Endothelial cell of umbilical vein (primary cell): ENCODE measurements at regions of chr5 and their contacts with region 1.

Region 1: DNA sequence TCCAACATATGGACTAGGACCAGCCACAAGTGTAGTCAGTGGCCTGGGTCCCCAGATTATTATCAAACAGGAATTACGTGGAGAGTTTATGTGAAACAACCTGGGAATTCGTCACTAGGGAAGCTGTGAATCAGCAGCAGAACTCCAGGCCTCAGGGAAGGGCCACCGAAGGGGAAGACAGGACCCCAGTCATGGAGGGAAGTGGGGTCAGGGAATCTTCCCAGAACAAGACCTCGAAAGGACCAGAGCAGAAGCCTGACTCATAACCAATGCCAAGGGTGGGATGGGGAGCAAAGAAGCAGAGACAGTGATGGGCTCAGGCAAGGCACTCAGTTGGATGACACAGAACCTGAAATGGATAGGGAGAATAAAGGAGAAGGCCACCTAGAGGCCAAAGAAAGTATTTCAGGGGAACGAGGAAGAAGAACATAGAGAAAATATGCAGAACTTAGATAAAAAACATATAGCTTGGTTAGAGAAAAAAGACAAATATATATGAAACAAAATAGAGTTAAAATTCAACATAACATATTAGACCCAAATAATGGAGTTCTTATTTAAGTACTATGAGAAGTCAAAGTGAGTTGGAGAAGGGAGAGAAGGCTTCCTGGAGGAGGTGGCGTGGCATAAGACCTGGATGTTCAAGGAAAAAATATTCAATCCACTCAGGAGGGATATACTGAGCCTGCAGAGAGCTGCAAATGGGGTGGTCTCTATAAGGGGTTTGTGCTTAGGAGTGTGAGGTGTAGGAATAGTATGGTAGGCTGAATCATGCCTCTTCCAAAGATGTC is 66.7 kb upstream of the CAST start:
- DNase-seq: peak; percentile 80
- H3K4me3 ChIP-seq: no peak overlapping the region
- H3K27ac ChIP-seq: peak overlapping the region; percentile 79
- H3K4me1 ChIP-seq: peaks cover 79% of the 10 kb centered on the region
- H3K27me3 ChIP-seq: no peaks in the 10 kb centered on the region
- CTCF ChIP-seq: peak; percentile 19 to 56
- POLR2A ChIP-seq: no peak

Region 2: DNA sequence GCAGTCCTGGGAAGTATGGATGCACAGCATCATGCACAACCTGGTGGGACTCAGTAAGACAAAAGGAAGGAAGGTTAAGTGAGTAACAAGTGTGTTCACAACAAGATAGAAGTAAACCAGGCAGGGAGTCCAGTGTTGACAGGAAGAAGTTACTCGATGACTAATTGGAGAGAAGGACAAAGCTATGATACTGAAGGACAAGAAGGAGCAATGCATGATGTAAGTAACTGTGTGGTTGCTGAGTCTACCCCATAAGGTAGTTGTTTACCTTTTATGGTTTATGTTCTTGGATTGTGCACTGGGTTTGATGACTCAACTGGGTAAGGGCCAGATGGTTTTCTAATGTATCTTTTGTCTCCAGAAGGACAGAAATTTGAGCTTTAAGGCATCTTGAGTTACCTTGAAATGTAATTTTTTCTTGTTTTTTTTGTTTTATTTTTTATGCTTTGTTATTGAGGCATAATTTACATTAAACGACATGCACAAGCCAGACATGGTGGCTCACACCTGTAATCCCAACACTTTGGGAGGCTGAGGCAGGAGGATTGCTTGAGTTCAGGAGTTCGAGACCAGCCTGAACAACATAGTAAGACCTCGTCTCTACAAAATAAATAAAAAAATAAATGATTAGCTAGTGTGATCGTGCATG is 22.5 kb before region 1 on chr5:
- CTCF ChIA-PET with region 1: interaction called, 16 read pairs
- POLR2A ChIA-PET with region 1: no interaction called
- dilution Hi-C with region 1: no loop called
- intact Hi-C with region 1: no loop called
- DNase-seq: peak; percentile 93
- H3K4me3 ChIP-seq: no peak overlapping the region
- H3K27ac ChIP-seq: peak overlapping the region; percentile 96
- H3K4me1 ChIP-seq: peaks cover 42% of the 10 kb centered on the region
- H3K27me3 ChIP-seq: no peaks in the 10 kb centered on the region
- CTCF ChIP-seq: no peak
- POLR2A ChIP-seq: peak; percentile 74